ENCODE measurements at regions of chr6 and their contacts with region 1.

Region 1: GRCh38 chr6:34324738-34325444 is 67.6 kb downstream of the NUDT3 start:
- DNase-seq: peak; percentile 47 to 68
- H3K4me3 ChIP-seq: no peak overlapping the region
- H3K27ac ChIP-seq: peak overlapping the region in 1 of 2 donors; percentile 7
- H3K4me1 ChIP-seq: peaks cover 0 to 8% (median 3%) of the 10 kb centered on the region in 4 donors
- H3K27me3 ChIP-seq: no peaks in the 10 kb centered on the region
- CTCF ChIP-seq: no peak

Region 2: DNA sequence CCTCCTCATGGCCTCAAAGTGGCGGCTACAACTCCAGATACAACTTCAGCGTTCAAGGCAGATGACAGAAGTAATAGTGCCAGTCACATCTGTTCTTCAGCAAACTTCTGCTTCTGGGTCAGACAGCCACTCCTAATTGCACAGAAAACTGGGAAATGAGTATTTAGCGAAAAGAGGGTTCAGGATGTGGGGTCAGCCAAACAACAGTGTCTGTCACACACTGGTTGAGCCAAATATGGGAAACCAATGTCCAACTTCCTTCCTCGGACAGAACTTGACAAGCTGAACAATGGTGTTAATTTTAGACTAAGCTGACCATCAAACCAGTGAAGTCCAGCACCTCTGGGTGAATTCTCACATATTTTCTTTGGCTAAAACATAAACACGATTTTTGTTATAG is 45.5 kb after region 1 on chr6:
- intact Hi-C with region 1: loop called (anchors 10 kb)
- DNase-seq: no peak
- H3K4me3 ChIP-seq: no peak overlapping the region
- H3K27ac ChIP-seq: no peak overlapping the region
- H3K4me1 ChIP-seq: peaks cover 0 to 5% (median 0%) of the 10 kb centered on the region in 4 donors
- H3K27me3 ChIP-seq: no peaks in the 10 kb centered on the region
- CTCF ChIP-seq: no peak

Region 3: DNA sequence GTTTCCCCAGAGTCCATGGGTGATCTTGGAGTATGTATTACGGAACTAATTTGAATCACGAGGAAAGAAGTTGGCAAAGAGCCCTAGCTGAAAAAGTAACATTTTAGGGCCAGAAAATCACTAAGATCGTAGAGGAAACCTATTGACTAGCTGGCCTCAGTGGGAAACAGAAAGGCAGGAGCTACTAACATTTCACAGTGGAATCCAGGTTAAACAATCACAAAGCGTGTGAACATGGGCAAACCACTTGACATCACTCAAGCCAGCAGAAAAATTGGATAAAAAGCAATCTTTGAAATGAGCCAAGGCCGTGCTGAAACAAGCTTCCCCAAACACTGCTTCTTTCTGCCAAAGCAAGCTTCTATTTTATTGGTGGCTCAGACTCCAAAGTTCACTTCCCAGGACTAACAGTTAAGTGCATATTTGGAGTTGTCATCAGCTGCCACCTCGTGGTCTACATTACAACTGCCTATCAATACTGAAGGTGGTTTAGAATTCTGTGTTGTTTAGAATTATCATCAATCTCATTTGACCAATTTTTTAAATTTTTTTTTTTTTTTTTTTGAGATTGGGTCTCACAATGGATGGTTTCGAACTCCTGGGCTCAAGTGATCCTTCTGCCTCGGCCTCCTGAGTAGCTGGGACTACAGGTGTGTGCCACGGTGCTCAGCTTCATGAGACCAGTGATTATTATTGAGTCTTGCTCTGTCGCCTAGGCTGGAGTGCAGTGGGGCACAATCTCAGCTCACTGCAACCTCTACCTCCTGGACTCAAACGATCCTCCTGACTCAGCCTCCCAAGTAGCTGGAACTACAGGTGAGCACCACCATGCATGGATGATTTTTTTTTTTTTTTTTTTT is 90.3 kb after region 1 on chr6:
- intact Hi-C with region 1: no loop called
- DNase-seq: peak; percentile 75 to 79
- H3K4me3 ChIP-seq: peak overlapping the region in 1 of 2 donors; percentile 10
- H3K27ac ChIP-seq: peak overlapping the region; percentile 76 to 77
- H3K4me1 ChIP-seq: peaks cover 0 to 12% (median 8%) of the 10 kb centered on the region in 4 donors
- H3K27me3 ChIP-seq: no peaks in the 10 kb centered on the region
- CTCF ChIP-seq: peak; percentile 70 to 90